ENCODE measurements at regions of chr6 and their contacts with region 1.

Region 1: GRCh38 chr6:170529839-170530469 is 23.2 kb downstream of the PSMB1 start:
- DNase-seq: peak; percentile 55 to 97 (median 82)

Region 2: DNA sequence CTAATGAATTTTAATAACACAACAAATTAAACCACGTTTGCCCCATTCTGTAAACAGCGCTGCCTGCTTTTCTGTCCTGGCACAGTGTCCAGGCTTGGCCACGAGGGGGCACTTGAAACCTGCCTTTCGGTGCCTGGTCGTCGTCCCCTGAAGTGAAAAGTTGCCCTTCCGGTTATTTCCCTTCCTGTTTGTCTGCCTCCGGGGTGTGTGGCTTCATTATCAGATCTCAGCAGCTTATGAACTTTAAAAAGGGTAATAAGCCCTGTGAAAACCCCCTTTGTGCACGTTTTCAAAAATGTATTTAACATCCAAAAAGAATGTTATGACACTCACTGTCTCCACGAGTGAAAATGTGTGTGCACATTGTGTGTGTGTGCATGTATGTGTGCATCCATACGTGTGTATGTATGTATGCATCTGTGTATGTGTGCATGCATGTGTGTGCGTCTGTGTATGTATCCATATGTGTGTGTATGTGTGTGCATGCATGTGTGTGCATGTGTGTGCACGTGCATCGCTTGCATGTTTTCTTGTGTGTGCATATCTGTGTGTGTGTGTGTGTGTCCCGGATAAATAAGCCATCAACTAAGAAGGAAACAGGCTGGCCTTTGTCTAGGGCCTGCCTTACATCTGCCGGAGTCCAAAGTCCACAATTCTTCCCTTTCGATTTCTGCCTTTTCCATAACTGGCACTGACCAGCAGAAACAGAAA is 1634.7 kb before region 1 on chr6:
- intact Hi-C with region 1: loop called (anchors 10 kb)
- DNase-seq: peak; percentile 69 to 97 (median 86)

Region 3: GRCh38 chr6:169789982-169790927 is 739.7 kb before region 1 on chr6:
- intact Hi-C with region 1: loop called (anchors 1 kb)
- DNase-seq: peak; percentile 68 to 97 (median 82)

Region 4: GRCh38 chr6:169831450-169832246 is 698.3 kb before region 1 on chr6:
- intact Hi-C with region 1: loop called (anchors 1 kb)
- DNase-seq: peak; percentile 67 to 97 (median 87)

Region 5: DNA sequence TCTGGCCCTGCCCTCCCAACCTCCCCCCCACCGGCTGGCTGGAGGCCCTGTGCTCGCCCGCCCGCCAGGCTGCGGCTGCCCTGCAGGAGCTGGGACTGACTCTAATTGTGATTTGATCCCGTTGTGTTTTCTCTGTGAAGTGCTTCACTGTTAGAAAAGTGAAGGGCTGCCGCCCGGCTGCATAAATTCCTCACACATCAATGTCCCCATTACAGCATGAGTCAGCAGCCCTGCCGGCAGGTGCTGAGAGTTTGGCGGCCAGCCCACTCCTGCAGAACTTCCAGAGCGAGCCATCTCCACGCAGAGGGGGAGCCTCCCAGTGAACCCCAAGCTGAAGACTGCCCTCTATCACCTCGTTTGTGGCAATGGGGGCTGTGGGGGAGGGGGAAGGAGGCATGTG is 377.0 kb before region 1 on chr6:
- intact Hi-C with region 1: no loop called
- DNase-seq: peak in 8 of 10 donors; percentile 46 to 94 (median 70)

Region 6: GRCh38 chr6:170295510-170296422 is 234.2 kb before region 1 on chr6:
- intact Hi-C with region 1: loop called (anchors 10 kb)
- DNase-seq: peak in 4 of 10 donors; percentile 65 to 91 (median 75)

Region 7: GRCh38 chr6:170367241-170367640 is 162.7 kb before region 1 on chr6:
- intact Hi-C with region 1: loop called (anchors 10 kb)
- DNase-seq: peak in 2 of 10 donors; percentile 37 to 68

Measured in posterior cingulate gyrus (tissue), 11 donors.